Esophagus squamous epithelium (tissue), 5 donors: ENCODE measurements at regions of chr18 and their contacts with region 1.

Region 1: GRCh38 chr18:24488824-24489493 is 28.5 kb downstream of the HRH4 start:
- DNase-seq: no peak
- H3K4me3 ChIP-seq: no peak overlapping the region
- H3K27ac ChIP-seq: no peak overlapping the region
- H3K4me1 ChIP-seq: peaks cover 0 to 7% (median 0%) of the 10 kb centered on the region in 3 donors
- H3K27me3 ChIP-seq: peaks cover 0 to 8% (median 0%) of the 10 kb centered on the region in 4 donors
- CTCF ChIP-seq: peak; percentile 57 to 85 (median 74)
- POLR2A ChIP-seq: no peak

Region 2: GRCh38 chr18:24362758-24363157 is 126.2 kb before region 1 on chr18:
- intact Hi-C with region 1: loop called (anchors 5 kb)
- DNase-seq: no peak
- H3K4me3 ChIP-seq: no peak overlapping the region
- H3K27ac ChIP-seq: no peak overlapping the region
- H3K4me1 ChIP-seq: peaks cover 0 to 18% (median 4%) of the 10 kb centered on the region in 3 donors
- H3K27me3 ChIP-seq: no peaks in the 10 kb centered on the region
- CTCF ChIP-seq: no peak
- POLR2A ChIP-seq: no peak

Region 3: GRCh38 chr18:24868760-24869237 is 379.8 kb after region 1 on chr18:
- intact Hi-C with region 1: no loop called
- DNase-seq: no peak
- H3K4me3 ChIP-seq: no peak overlapping the region
- H3K27ac ChIP-seq: no peak overlapping the region
- H3K4me1 ChIP-seq: peaks cover 0 to 7% (median 0%) of the 10 kb centered on the region in 3 donors
- H3K27me3 ChIP-seq: no peaks in the 10 kb centered on the region
- CTCF ChIP-seq: no peak
- POLR2A ChIP-seq: no peak